A673 (cell line): ENCODE measurements at regions of chr5 and their contacts with region 1.

Region 1: DNA sequence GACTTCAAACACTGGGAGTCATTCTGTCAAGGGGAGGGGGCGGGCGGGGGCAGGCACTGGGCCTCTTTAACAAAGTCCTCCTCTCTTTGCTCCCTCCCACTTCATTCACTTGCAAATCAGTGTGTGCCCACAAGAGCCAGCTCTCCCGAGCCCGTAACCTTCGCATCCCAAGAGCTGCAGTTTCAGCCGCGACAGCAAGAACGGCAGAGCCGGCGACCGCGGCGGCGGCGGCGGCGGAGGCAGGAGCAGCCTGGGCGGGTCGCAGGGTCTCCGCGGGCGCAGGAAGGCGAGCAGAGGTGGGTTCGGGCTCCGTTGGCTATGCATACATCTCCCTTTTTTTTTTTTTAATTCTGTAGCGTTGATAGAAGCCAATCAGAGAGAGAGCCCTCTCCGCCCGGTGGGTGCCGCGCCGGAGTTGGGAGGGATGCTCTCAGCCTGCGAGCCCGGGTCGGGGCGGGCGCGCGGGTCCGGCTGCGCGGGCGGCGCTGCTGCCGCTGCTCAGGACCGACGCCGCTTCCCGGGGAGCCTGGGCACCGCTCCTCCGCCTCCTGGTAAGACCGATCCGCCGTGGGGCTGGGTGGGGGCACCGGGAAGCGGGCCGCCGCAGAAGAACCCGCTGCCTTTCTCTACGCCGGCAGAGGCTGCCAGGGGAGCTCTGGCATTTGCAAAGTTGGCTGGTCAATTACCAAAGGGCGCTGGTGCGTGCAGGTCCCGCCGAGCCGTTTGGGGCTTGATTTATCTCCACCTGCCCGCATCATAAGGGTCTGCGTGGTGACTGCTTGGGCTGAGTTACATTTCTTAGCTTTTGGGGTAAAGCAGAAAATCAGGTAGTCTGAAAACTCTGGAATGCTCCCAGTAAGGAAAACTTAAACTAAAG is at the start of gene CDH6:
- DNase-seq: peak; percentile 69
- H3K4me3 ChIP-seq: peak within 1 kb of the TSS; percentile 59
- H3K27ac ChIP-seq: no peak within 1 kb of the TSS
- H3K4me1 ChIP-seq: peaks cover 11% of the 10 kb centered on the region
- H3K27me3 ChIP-seq: peaks cover 10% of the 10 kb centered on the region
- CTCF ChIP-seq: no peak
- total RNA-seq, gene CDH6: 3.6 and 4.1 TPM in 2 replicates

Region 2: DNA sequence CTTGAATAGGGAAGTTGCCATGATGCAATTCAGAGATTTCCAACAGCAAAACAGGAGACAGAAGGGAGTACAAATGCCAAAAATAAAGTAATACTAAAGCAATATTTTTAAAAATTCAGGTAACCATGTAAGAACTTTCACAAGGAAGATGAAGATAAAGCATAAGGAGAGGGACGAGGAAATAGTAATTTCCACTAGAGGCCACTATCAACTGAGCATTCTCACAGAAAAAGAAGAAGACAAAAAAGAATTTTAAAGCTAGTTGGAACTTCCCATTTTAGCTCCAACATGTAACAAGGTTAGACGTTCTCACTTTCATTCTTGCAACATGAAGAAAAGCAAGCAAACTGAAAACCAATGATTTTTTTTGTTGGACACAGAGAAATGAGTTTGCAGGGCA is 780.3 kb before region 1 on chr5:
- CTCF ChIA-PET with region 1: no interaction called
- POLR2A ChIA-PET with region 1: no interaction called
- intact Hi-C with region 1: loop called (anchors 10 kb)
- DNase-seq: peak; percentile 7
- H3K4me3 ChIP-seq: no peak overlapping the region
- H3K27ac ChIP-seq: no peak overlapping the region
- H3K4me1 ChIP-seq: no peaks in the 10 kb centered on the region
- H3K27me3 ChIP-seq: no peaks in the 10 kb centered on the region
- CTCF ChIP-seq: peak; percentile 45; the same call in 1 of the 2 replicates

Region 3: GRCh38 chr5:30804739-30805505 is 388.9 kb before region 1 on chr5:
- CTCF ChIA-PET with region 1: no interaction called
- POLR2A ChIA-PET with region 1: no interaction called
- intact Hi-C with region 1: loop called (anchors 5 kb)
- DNase-seq: peak; percentile 54
- H3K4me3 ChIP-seq: no peak overlapping the region
- H3K27ac ChIP-seq: no peak overlapping the region
- H3K4me1 ChIP-seq: no peaks in the 10 kb centered on the region
- H3K27me3 ChIP-seq: no peaks in the 10 kb centered on the region
- CTCF ChIP-seq: peak; percentile 54

Region 4: DNA sequence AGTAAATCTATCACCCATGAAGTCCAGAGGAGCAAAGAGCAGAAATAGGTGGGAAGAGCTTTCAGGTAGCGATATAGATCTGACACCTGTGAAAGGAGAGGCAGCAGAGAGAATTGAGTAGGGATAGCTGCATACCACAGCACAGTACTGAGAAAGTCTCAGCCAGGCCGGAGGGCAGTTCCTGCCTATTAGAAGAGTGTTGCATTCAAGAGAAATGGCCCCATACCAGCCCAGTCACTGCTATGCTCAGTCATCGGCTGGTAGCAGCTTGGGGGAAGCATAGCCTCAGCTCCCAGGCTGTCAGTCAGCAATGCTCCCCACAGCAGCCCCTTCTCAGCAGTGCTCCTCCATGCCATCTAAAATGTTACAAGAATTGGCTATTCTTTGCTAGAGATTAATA is 285.5 kb before region 1 on chr5:
- CTCF ChIA-PET with region 1: interaction called, 12 read pairs
- POLR2A ChIA-PET with region 1: no interaction called
- intact Hi-C with region 1: no loop called
- DNase-seq: no peak
- H3K4me3 ChIP-seq: no peak overlapping the region
- H3K27ac ChIP-seq: no peak overlapping the region
- H3K4me1 ChIP-seq: no peaks in the 10 kb centered on the region
- H3K27me3 ChIP-seq: no peaks in the 10 kb centered on the region
- CTCF ChIP-seq: no peak